ENCODE measurements at regions of chr18 and their contacts with region 1.

Region 1: GRCh38 chr18:46281185-46282176 is 177.3 kb downstream of the HAUS1 start:
- DNase-seq: peak; percentile 77
- H3K4me3 Mint-ChIP-seq: no peak overlapping the region
- H3K27ac Mint-ChIP-seq: no peak overlapping the region
- H3K4me1 Mint-ChIP-seq: peaks cover 12% of the 10 kb centered on the region
- H3K27me3 Mint-ChIP-seq: no peaks in the 10 kb centered on the region

Region 2: GRCh38 chr18:46148810-46149209 is 132.7 kb before region 1 on chr18:
- CTCF ChIA-PET with region 1: interaction called, 32 read pairs
- DNase-seq: peak; percentile 69
- H3K4me3 Mint-ChIP-seq: no peak overlapping the region
- H3K27ac Mint-ChIP-seq: peak overlapping the region; percentile 75
- H3K4me1 Mint-ChIP-seq: peaks cover 50% of the 10 kb centered on the region
- H3K27me3 Mint-ChIP-seq: no peaks in the 10 kb centered on the region

Region 3: GRCh38 chr18:46268671-46269070 is 12.8 kb before region 1 on chr18:
- CTCF ChIA-PET with region 1: interaction called, 11 read pairs
- DNase-seq: no peak
- H3K4me3 Mint-ChIP-seq: no peak overlapping the region
- H3K27ac Mint-ChIP-seq: no peak overlapping the region
- H3K4me1 Mint-ChIP-seq: peaks cover 29% of the 10 kb centered on the region
- H3K27me3 Mint-ChIP-seq: no peaks in the 10 kb centered on the region

Region 4: DNA sequence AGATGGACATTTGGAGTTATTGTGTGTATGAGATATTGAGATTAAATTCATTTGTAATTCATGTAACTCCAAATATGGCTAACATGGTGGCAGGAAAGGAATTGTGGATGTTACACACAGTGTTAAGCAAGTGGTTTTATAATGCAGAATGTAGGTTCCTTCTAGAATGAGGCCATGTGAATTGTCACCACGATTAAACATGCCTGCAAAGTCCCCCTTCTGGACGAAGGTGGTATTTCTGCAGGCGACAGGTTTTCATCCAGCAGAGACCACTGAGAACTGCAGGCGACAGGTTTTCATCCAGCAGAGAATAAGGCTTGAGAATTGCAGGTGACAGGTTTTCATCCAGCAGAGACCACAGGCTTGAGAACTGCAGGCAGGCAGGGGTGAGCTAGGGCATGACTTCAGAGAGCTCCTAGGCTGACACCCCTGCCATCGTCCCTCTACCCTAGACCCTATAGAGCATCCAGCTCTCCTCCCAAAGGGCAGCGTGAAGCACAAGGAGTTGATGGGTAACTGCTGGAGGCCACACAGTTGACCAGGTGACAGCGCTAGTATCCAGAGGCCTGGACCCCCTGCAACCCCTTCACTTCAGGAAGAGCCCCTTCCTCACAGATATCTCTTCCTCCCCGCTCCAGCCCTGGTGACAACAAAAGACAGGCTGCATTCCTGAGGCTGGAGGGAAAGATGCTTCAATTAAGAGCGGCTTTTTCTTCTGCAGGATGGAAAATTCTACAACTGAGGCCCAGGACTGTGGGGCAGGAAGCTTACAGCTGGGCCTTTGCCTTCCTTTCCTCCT is 199.8 kb after region 1 on chr18:
- CTCF ChIA-PET with region 1: interaction called, 64 read pairs
- DNase-seq: peak; percentile 74
- H3K4me3 Mint-ChIP-seq: no peak overlapping the region
- H3K27ac Mint-ChIP-seq: no peak overlapping the region
- H3K4me1 Mint-ChIP-seq: no peaks in the 10 kb centered on the region
- H3K27me3 Mint-ChIP-seq: peaks cover 14% of the 10 kb centered on the region

Region 5: DNA sequence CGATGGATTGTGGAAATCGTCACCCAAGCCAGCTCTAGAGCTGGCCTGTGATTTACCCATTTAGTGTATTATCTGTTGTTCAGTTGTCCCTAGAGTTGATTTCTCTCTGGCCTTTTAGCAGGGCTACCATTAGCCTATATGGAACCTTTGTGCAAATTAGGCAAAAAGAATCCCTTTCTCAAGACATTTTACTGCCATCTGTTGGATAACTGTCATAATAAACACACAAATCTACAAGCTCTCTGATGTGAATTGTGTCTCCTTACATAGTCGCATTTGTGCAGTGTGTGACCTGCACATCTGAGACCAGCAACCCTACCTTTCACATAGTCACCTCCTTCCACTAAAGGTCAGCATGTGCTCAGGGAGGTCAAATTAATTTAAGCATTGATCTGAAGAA is 341.5 kb after region 1 on chr18:
- CTCF ChIA-PET with region 1: interaction called, 13 read pairs
- DNase-seq: no peak
- H3K4me3 Mint-ChIP-seq: no peak overlapping the region
- H3K27ac Mint-ChIP-seq: peak overlapping the region; percentile 88
- H3K4me1 Mint-ChIP-seq: peaks cover 43% of the 10 kb centered on the region
- H3K27me3 Mint-ChIP-seq: peaks cover 23% of the 10 kb centered on the region

Region 6: DNA sequence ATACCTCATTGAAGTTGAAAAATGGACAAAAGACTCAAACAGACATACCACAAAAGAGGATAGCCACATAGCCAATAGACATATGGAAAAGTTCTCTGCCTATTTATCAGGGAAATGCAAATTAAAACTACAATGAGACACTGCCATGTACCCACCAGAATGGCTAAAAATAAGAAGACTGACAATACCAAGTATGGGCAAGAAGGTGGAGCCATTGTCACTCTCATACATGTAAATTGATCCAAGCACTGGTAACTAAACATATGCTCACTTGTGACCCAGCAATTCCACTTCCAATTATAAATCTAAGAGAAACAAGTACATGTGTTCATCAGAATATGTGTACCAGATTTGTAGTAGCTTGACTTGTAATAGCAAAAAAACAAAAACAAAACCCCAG is 370.9 kb after region 1 on chr18:
- CTCF ChIA-PET with region 1: interaction called, 119 read pairs
- DNase-seq: no peak
- H3K4me3 Mint-ChIP-seq: no peak overlapping the region
- H3K27ac Mint-ChIP-seq: no peak overlapping the region
- H3K4me1 Mint-ChIP-seq: no peaks in the 10 kb centered on the region
- H3K27me3 Mint-ChIP-seq: peaks cover 15% of the 10 kb centered on the region

Region 7: GRCh38 chr18:46660955-46661749 is 379.7 kb after region 1 on chr18:
- CTCF ChIA-PET with region 1: interaction called, 119 read pairs
- DNase-seq: no peak
- H3K4me3 Mint-ChIP-seq: no peak overlapping the region
- H3K27ac Mint-ChIP-seq: no peak overlapping the region
- H3K4me1 Mint-ChIP-seq: no peaks in the 10 kb centered on the region
- H3K27me3 Mint-ChIP-seq: peaks cover 18% of the 10 kb centered on the region

Measured in activated naive CD4-positive, alpha-beta T cell treated with anti-CD3 and anti-CD28 coated beads, Interleukin-2, amount 10 ng/mL, durations not matched to agents 7 days and 5 days (primary cell).